Activated T-helper 1 cell treated with anti-CD3 and anti-CD28 coated beads, Interleukin-12 subunit alpha, Interleukin-12 subunit beta, Interleukin-2, Interleukin-4 antibody, amounts not matched to agents 30 ng/mL and 10 ng/mL and 1 ng/mL, durations not matched to agents 14 hours and 24 hours and 36 hours (primary cell): ENCODE measurements at regions of chr17 and their contacts with region 1.

Region 1: GRCh38 chr17:8935191-8935590 is 30.3 kb downstream of the PIK3R5 start:
- DNase-seq: no peak
- H3K4me3 Mint-ChIP-seq: peak overlapping the region; percentile 68
- H3K27ac Mint-ChIP-seq: peak overlapping the region; percentile 93
- H3K4me1 Mint-ChIP-seq: peaks cover 59% of the 10 kb centered on the region
- H3K27me3 Mint-ChIP-seq: no peaks in the 10 kb centered on the region

Region 2: DNA sequence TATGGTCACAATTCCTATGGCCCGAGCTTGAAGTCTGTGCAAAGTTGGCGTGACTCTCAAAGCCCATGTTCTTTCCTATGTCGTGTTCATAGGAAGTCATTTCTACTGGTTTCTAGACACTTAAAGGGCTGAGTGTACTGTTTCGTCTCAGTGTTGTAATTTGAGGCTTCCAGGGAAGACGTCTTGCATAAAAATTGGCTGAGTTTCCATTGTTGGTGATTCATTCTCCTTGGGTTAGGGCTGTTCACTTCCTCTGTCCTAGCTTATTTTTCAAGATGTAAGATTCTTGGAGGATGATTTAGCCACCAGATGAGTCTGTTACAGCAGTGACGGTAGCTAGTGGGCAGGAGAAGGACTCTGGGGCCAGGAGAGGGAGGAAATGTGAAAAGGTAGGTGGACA is 12.7 kb before region 1 on chr17:
- intact Hi-C with region 1: loop called (anchors 1 kb)
- DNase-seq: no peak
- H3K4me3 Mint-ChIP-seq: peak overlapping the region; percentile 9
- H3K27ac Mint-ChIP-seq: peak overlapping the region; percentile 87
- H3K4me1 Mint-ChIP-seq: peaks cover 19% of the 10 kb centered on the region
- H3K27me3 Mint-ChIP-seq: no peaks in the 10 kb centered on the region

Region 3: GRCh38 chr17:8949061-8949661 is 14.0 kb after region 1 on chr17:
- intact Hi-C with region 1: loop called (anchors 1 kb)
- DNase-seq: no peak
- H3K4me3 Mint-ChIP-seq: peak overlapping the region; percentile 28
- H3K27ac Mint-ChIP-seq: peak overlapping the region; percentile 61
- H3K4me1 Mint-ChIP-seq: peaks cover 84% of the 10 kb centered on the region
- H3K27me3 Mint-ChIP-seq: no peaks in the 10 kb centered on the region